ENCODE measurements at regions of chr16 and their contacts with region 1.

Region 1: GRCh38 chr16:29805378-29806098 is 791 bp upstream of the MAZ start:
- DNase-seq: peak; percentile 96 to 98 (median 98)
- ATAC-seq: peak; percentile 86
- H3K4me3 ChIP-seq: peak overlapping the region; percentile 87
- H3K4me3 Mint-ChIP-seq: peak overlapping the region; percentile 88 to 100 (median 98)
- H3K27ac ChIP-seq: peak overlapping the region; percentile 95
- H3K27ac Mint-ChIP-seq: peak overlapping the region; percentile 95 to 100 (median 99)
- H3K4me1 ChIP-seq: peaks cover 34 to 39% of the 10 kb centered on the region in 2 donors
- H3K4me1 Mint-ChIP-seq: peaks cover 28 to 49% (median 41%) of the 10 kb centered on the region in 7 donors
- H3K27me3 ChIP-seq: no peaks in the 10 kb centered on the region
- H3K27me3 Mint-ChIP-seq: peaks cover 0 to 2% (median 0%) of the 10 kb centered on the region in 5 donors

Region 2: GRCh38 chr16:29745853-29746345 is 59.6 kb before region 1 on chr16 and contains the start of gene C16orf54:
- CTCF ChIA-PET with region 1: interaction called, 4 read pairs
- POLR2A ChIA-PET with region 1: interaction called, 30 read pairs
- intact Hi-C with region 1: loop called (anchors 1 to 5 kb)
- DNase-seq: peak; percentile 80 to 99 (median 98)
- ATAC-seq: peak; percentile 91
- H3K4me3 ChIP-seq: peak within 1 kb of the TSS; percentile 76
- H3K4me3 Mint-ChIP-seq: peak within 1 kb of the TSS; percentile 96 to 100 (median 99)
- H3K27ac ChIP-seq: peak within 1 kb of the TSS; percentile 99
- H3K27ac Mint-ChIP-seq: peak within 1 kb of the TSS; percentile 95 to 100 (median 99)
- H3K4me1 ChIP-seq: peaks cover 45 to 50% of the 10 kb centered on the region in 2 donors
- H3K4me1 Mint-ChIP-seq: peaks cover 42 to 71% (median 62%) of the 10 kb centered on the region in 7 donors
- H3K27me3 ChIP-seq: no peaks in the 10 kb centered on the region
- H3K27me3 Mint-ChIP-seq: peaks cover 0 to 3% (median 0%) of the 10 kb centered on the region in 5 donors
- total RNA-seq, gene C16orf54: 63.9 to 228 (median 151) TPM

Region 3: GRCh38 chr16:29790183-29790952 is 15.2 kb before region 1 on chr16 and contains the start of gene KIF22:
- CTCF ChIA-PET with region 1: interaction called, 28 read pairs
- POLR2A ChIA-PET with region 1: interaction called, 158 read pairs
- intact Hi-C with region 1: loop called (anchors 1 kb)
- DNase-seq: peak; percentile 98 to 100 (median 100)
- ATAC-seq: peak; percentile 98
- H3K4me3 ChIP-seq: peak within 1 kb of the TSS; percentile 83
- H3K4me3 Mint-ChIP-seq: peak within 1 kb of the TSS; percentile 92 to 100 (median 98)
- H3K27ac ChIP-seq: peak within 1 kb of the TSS; percentile 88
- H3K27ac Mint-ChIP-seq: peak within 1 kb of the TSS; percentile 93 to 99 (median 99)
- H3K4me1 ChIP-seq: peaks cover 21 to 29% of the 10 kb centered on the region in 2 donors
- H3K4me1 Mint-ChIP-seq: peaks cover 23 to 59% (median 46%) of the 10 kb centered on the region in 7 donors
- H3K27me3 ChIP-seq: no peaks in the 10 kb centered on the region
- H3K27me3 Mint-ChIP-seq: peaks cover 0 to 2% (median 0%) of the 10 kb centered on the region in 5 donors
- total RNA-seq, gene KIF22: 62.5 to 141 (median 81.3) TPM

Region 4: DNA sequence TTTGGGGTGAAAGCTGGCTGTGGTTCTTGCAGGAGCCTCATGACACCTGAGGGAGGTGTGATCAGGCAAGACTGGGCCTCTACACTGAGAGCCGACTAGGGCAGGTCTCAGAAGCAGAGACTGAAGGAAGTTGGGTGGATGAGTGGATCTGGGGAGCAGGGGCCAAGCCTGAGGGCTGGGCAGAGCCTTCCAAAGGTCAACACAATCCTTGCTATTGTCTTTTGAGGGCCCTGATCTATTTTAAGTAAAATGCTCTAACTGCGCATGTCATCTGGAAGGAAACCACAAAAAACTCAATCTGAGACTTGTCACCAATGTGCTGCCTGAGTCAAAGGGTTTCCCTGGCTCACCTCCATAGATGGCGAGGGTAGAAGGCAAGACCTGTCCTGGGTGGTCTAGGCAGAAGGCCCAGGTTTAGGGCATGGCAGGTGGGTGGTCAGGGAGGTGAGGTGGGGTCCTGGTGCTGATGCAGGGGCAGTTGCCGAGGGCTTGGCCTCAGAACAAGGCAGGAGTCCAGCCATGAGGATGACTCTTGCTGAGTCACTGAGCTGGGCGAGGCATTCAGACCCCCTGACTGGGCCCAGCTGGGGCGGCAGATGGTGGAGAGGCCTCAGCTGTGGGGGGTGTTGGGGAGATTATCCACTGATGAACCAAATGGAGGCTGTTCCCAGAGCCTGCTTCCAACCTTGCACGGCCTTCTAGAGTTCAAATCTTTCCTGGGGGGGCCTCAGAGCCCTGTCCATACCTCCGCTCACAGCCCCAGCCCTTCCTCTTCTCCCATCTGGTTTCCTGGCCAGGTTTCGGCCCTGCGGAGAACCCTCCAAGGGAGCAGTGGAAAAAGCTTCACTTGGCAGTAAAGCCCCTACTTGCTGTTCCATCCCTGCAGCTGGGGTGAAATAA is 19.9 kb after region 1 on chr16:
- CTCF ChIA-PET with region 1: interaction called, 14 read pairs
- POLR2A ChIA-PET with region 1: interaction called, 109 read pairs
- intact Hi-C with region 1: loop called (anchors 1 to 2 kb)
- DNase-seq: peak in 6 of 9 donors; percentile 36 to 52 (median 43)
- ATAC-seq: no peak
- H3K4me3 ChIP-seq: peak overlapping the region; percentile 44
- H3K4me3 Mint-ChIP-seq: peak overlapping the region; percentile 70 to 95 (median 86)
- H3K27ac ChIP-seq: peak overlapping the region; percentile 72
- H3K27ac Mint-ChIP-seq: peak overlapping the region; percentile 56 to 99 (median 96)
- H3K4me1 ChIP-seq: peaks cover 61 to 81% of the 10 kb centered on the region in 2 donors
- H3K4me1 Mint-ChIP-seq: peaks cover 39 to 97% (median 57%) of the 10 kb centered on the region in 7 donors
- H3K27me3 ChIP-seq: no peaks in the 10 kb centered on the region
- H3K27me3 Mint-ChIP-seq: no peaks in the 10 kb centered on the region

Region 5: GRCh38 chr16:29848420-29849297 is 43.1 kb after region 1 on chr16:
- CTCF ChIA-PET with region 1: interaction called, 53 read pairs
- POLR2A ChIA-PET with region 1: interaction called, 63 read pairs
- intact Hi-C with region 1: loop called (anchors 1 kb)
- DNase-seq: peak; percentile 71 to 87 (median 81)
- ATAC-seq: peak; percentile 96
- H3K4me3 ChIP-seq: no peak overlapping the region
- H3K4me3 Mint-ChIP-seq: no peak overlapping the region
- H3K27ac ChIP-seq: no peak overlapping the region
- H3K27ac Mint-ChIP-seq: peak overlapping the region; percentile 18 to 88 (median 56)
- H3K4me1 ChIP-seq: peaks cover 0 to 7% of the 10 kb centered on the region in 2 donors
- H3K4me1 Mint-ChIP-seq: peaks cover 8 to 17% (median 9%) of the 10 kb centered on the region in 7 donors
- H3K27me3 ChIP-seq: no peaks in the 10 kb centered on the region
- H3K27me3 Mint-ChIP-seq: no peaks in the 10 kb centered on the region

Region 6: GRCh38 chr16:29873319-29873718 is 67.8 kb after region 1 on chr16:
- CTCF ChIA-PET with region 1: no interaction called
- POLR2A ChIA-PET with region 1: no interaction called
- intact Hi-C with region 1: no loop called
- DNase-seq: no peak
- ATAC-seq: no peak
- H3K4me3 ChIP-seq: no peak overlapping the region
- H3K4me3 Mint-ChIP-seq: no peak overlapping the region
- H3K27ac ChIP-seq: no peak overlapping the region
- H3K27ac Mint-ChIP-seq: no peak overlapping the region
- H3K4me1 ChIP-seq: peaks cover 0 to 11% of the 10 kb centered on the region in 2 donors
- H3K4me1 Mint-ChIP-seq: peaks cover 6 to 20% (median 17%) of the 10 kb centered on the region in 7 donors
- H3K27me3 ChIP-seq: no peaks in the 10 kb centered on the region
- H3K27me3 Mint-ChIP-seq: peaks cover 9 to 30% (median 14%) of the 10 kb centered on the region in 5 donors

Region 7: DNA sequence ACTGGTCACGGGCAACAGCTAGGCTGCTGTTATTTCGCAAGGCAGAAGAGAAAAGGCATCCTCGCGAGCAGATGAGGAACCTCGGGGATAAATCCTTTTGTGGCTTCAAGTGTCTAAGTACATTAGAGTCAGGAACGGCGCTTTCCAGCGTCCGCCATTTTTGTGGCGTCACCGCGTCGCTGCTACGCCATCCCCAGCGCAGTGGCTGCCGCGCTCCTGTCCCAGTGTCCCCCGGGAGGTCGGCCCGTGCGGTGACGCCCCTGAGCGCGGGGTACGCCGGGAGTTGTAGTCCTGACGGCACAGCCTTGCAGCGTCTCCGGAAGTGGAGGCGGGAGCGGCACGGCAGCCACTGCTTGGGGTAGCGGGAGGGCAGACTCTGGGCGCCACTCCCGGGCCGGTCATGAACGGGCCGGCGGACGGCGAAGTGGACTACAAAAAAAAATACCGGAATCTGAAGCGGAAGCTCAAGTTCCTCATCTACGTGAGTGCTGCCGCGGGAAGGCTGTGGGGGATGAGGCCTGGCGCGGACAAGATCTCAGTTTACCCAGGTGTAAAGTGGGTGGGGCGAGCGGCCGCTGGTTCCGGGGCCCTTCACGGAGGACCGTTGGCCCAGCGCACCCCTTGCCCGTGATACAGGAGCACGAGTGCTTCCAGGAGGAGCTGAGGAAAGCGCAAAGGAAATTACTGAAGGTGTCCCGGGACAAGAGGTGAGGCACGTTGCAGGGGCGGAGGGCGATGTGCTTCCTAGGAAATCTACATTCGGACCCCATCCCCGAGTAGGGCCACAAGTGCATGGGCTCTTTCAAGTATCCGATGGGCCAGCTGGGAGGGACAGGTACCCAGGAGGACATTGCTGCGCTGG is 190.6 kb after region 1 on chr16 and contains the start of gene INO80E:
- CTCF ChIA-PET with region 1: no interaction called
- POLR2A ChIA-PET with region 1: interaction called, 4 read pairs
- intact Hi-C with region 1: loop called (anchors 1 to 5 kb)
- DNase-seq: peak; percentile 94 to 99 (median 98)
- ATAC-seq: peak; percentile 99
- H3K4me3 ChIP-seq: peak within 1 kb of the TSS; percentile 100
- H3K4me3 Mint-ChIP-seq: peak within 1 kb of the TSS; percentile 86 to 99 (median 98)
- H3K27ac ChIP-seq: peak within 1 kb of the TSS; percentile 99
- H3K27ac Mint-ChIP-seq: peak within 1 kb of the TSS; percentile 93 to 99 (median 97)
- H3K4me1 ChIP-seq: peaks cover 16 to 18% of the 10 kb centered on the region in 2 donors
- H3K4me1 Mint-ChIP-seq: peaks cover 24 to 53% (median 38%) of the 10 kb centered on the region in 7 donors
- H3K27me3 ChIP-seq: no peaks in the 10 kb centered on the region
- H3K27me3 Mint-ChIP-seq: no peaks in the 10 kb centered on the region
- total RNA-seq, gene INO80E: 71.7 to 141 (median 95.8) TPM

Region 8: GRCh38 chr16:30082545-30083090 is 277.1 kb after region 1 on chr16:
- CTCF ChIA-PET with region 1: no interaction called
- POLR2A ChIA-PET with region 1: no interaction called
- intact Hi-C with region 1: no loop called
- DNase-seq: no peak
- ATAC-seq: no peak
- H3K4me3 ChIP-seq: no peak overlapping the region
- H3K4me3 Mint-ChIP-seq: no peak overlapping the region
- H3K27ac ChIP-seq: no peak overlapping the region
- H3K27ac Mint-ChIP-seq: peak overlapping the region in 5 of 9 donors; percentile 14 to 73 (median 63)
- H3K4me1 ChIP-seq: peaks cover 2 to 9% of the 10 kb centered on the region in 2 donors
- H3K4me1 Mint-ChIP-seq: peaks cover 16 to 29% (median 20%) of the 10 kb centered on the region in 7 donors
- H3K27me3 ChIP-seq: no peaks in the 10 kb centered on the region
- H3K27me3 Mint-ChIP-seq: no peaks in the 10 kb centered on the region